ENCODE measurements at regions of chr4 and their contacts with region 1.

Region 1: DNA sequence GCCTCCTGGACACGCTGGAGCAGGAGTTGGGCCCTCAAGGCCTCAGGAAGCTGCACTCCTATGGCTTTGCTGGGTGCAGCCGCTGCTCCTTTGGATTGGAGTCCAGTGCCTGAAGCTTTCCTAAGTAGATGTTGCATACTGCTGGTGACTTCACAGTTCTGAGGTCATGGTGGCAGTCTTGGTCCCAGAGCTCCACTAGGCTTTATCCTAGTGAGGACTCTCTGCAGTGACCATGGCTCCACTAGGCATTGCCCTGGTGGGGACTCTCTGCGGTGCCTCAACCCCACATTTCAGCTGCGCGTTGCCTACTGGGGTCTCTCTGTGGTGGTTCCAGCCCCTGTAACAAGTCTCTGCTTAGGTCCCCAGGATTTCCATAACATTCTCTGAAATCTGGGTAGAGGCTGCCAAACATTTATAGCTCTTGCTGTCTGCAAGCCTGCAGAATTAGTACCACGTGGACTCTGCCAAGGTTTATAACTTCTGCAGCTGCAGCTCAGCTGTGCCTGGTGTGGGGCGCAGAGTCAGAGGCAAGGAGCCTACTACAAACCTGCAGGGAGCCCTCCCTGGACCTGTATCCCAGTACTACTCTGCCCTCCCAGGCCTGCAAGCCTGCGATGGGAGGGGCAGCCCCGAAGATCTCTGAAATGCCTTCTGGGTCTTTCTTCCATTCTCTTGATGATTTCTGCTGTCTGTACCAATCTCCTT is 46.0 kb upstream of the NFKB1 start:
- DNase-seq: no peak
- H3K4me3 ChIP-seq: no peak overlapping the region
- H3K27ac ChIP-seq: no peak overlapping the region
- H3K4me1 ChIP-seq: peaks cover 0 to 18% (median 3%) of the 10 kb centered on the region in 4 experiments
- H3K27me3 ChIP-seq: no peaks in the 10 kb centered on the region

Region 2: GRCh38 chr4:102217345-102217744 is 237.8 kb before region 1 on chr4:
- CTCF ChIA-PET with region 1: no interaction called
- POLR2A ChIA-PET with region 1: no interaction called
- DNase-seq: no peak
- H3K4me3 ChIP-seq: no peak overlapping the region
- H3K27ac ChIP-seq: no peak overlapping the region
- H3K4me1 ChIP-seq: no peaks in the 10 kb centered on the region
- H3K27me3 ChIP-seq: no peaks in the 10 kb centered on the region

Region 3: GRCh38 chr4:102474757-102475498 is 19.8 kb after region 1 on chr4:
- CTCF ChIA-PET with region 1: no interaction called
- POLR2A ChIA-PET with region 1: no interaction called
- DNase-seq: no peak
- H3K4me3 ChIP-seq: no peak overlapping the region
- H3K27ac ChIP-seq: no peak overlapping the region
- H3K4me1 ChIP-seq: no peaks in the 10 kb centered on the region
- H3K27me3 ChIP-seq: no peaks in the 10 kb centered on the region

Region 4: GRCh38 chr4:102543030-102543928 is 88.1 kb after region 1 on chr4:
- CTCF ChIA-PET with region 1: interaction called, 10 read pairs
- POLR2A ChIA-PET with region 1: no interaction called
- DNase-seq: no peak
- H3K4me3 ChIP-seq: no peak overlapping the region
- H3K27ac ChIP-seq: no peak overlapping the region
- H3K4me1 ChIP-seq: peaks cover 0 to 7% (median 5%) of the 10 kb centered on the region in 4 experiments
- H3K27me3 ChIP-seq: no peaks in the 10 kb centered on the region